Activated CD4-positive, alpha-beta memory T cell treated with anti-CD3 and anti-CD28 coated beads for 36 hours (primary cell): ENCODE measurements at regions of chr20 and their contacts with region 1.

Region 1: GRCh38 chr20:3420211-3420707 is 12.8 kb upstream of the DNAAF9 start:
- DNase-seq: peak; percentile 83
- H3K4me3 Mint-ChIP-seq: no peak overlapping the region
- H3K27ac Mint-ChIP-seq: peak overlapping the region; percentile 75
- H3K4me1 Mint-ChIP-seq: peaks cover 9% of the 10 kb centered on the region
- H3K27me3 Mint-ChIP-seq: no peaks in the 10 kb centered on the region

Region 2: DNA sequence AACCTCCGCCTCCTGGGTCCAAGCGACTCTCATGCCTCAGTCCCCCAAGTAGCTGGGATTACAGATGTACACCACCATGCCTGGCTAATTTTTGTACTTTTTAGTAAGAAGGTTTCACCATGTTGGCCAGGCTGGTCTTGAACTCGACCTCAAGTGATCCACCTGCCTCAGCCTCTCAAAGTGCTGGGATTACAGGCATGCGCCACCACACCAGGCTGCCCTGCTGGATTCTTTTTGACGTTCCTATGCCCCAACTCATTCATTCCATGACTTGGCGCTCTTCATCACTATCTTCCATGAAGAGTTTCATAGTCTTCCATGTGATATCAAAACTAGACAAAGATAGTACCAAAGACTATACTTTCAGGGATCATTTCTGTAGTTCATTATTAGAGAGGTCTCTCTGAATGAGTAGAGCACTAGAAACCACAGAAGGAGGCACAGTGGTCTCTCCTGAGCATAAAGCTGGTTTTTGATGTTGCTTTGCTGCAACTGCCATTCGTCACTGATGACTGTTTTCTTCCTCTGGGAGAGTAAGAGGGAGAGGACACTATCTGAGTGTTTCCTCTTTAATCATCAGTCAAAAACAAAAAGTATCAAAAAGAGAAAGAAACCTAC is 36.3 kb before region 1 on chr20:
- CTCF ChIA-PET with region 1: interaction called, 3 read pairs
- POLR2A ChIA-PET with region 1: interaction called, 10 read pairs
- intact Hi-C with region 1: loop called (anchors 1 kb)
- DNase-seq: peak; percentile 72
- H3K4me3 Mint-ChIP-seq: no peak overlapping the region
- H3K27ac Mint-ChIP-seq: peak overlapping the region; percentile 70
- H3K4me1 Mint-ChIP-seq: peaks cover 18% of the 10 kb centered on the region
- H3K27me3 Mint-ChIP-seq: no peaks in the 10 kb centered on the region

Region 3: DNA sequence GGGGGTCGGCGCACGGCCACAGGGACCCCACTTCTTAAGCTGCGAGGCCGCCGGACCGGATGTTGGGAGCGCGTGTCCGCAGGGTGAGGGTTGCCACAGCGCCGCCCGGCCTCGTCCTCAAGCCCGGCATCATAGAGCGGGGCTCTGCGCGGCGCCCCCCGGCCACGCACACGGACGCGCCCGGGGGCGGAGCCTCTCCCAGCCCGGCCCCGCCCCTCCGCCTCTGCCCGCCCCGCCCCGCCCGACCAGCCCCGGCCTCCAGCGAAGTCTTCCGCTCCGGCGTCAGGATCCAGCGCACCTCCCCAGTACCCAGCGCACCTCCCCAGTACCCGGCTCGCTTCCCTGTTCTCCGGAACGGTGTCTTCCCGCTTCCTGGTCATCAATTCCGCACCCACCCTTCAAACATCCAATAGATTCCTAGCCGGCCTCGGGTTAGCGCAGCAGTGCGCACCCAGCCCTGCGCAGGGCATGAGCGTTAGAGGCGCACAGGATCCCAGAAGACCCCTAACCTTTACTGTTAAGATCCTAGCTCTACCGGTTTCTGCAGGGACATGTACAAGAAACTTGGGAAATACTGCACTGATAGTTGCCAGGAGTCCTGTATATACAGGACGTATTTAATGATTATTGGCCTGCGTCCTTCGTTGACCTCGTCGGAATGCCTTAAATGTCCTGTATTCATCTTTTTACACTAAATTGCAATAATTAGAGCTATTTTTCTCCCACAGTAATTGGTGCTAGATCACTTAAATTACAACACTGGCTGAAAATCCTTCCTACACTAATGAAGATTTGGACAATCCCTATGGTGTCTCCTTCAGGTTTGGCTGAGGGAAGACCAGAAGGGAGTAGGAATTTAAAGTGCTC is 12.3 kb before region 1 on chr20:
- CTCF ChIA-PET with region 1: interaction called, 3 read pairs
- POLR2A ChIA-PET with region 1: interaction called, 5 read pairs
- intact Hi-C with region 1: loop called (anchors 1 kb)
- DNase-seq: peak; percentile 74
- H3K4me3 Mint-ChIP-seq: peak overlapping the region; percentile 84
- H3K27ac Mint-ChIP-seq: peak overlapping the region; percentile 75
- H3K4me1 Mint-ChIP-seq: peaks cover 34% of the 10 kb centered on the region
- H3K27me3 Mint-ChIP-seq: no peaks in the 10 kb centered on the region

Region 4: DNA sequence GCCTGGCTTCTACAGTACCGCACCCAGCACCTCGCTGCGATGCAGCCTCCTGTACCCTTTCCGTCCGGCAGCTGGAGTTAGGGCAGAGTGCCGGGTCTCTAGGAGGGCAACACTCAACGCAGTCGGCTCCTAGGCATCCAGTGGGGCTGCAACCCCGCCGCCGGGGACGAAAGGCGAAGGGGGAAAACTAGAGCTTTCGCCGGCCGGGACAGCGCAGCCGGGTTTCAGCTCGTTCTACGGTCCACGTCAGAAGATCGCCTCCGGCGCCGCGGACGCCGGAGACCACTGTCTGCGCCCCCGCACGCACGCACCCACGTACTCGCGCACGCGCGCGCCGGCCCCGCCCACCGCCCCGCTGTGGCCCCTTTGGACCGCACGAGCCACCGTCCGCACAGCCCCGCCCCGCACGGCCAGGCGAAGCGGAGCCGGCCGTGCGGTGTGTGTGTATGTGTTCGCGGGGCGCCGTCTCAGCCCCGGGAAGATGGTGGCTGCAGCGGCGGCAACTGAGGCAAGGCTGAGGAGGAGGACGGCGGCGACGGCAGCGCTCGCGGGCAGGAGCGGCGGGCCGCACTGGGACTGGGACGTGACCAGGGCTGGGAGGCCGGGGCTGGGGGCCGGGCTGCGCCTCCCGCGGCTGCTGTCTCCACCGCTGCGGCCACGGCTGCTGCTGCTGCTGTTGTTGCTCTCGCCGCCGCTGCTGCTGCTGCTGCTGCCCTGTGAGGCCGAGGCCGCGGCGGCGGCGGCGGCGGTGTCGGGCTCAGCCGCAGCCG is 50.6 kb after region 1 on chr20 and contains the start of gene ATRN:
- CTCF ChIA-PET with region 1: no interaction called
- POLR2A ChIA-PET with region 1: interaction called, 3 read pairs
- intact Hi-C with region 1: loop called (anchors 1 kb)
- DNase-seq: peak; percentile 95
- H3K4me3 Mint-ChIP-seq: peak within 1 kb of the TSS; percentile 85
- H3K27ac Mint-ChIP-seq: peak within 1 kb of the TSS; percentile 51
- H3K4me1 Mint-ChIP-seq: peaks cover 32% of the 10 kb centered on the region
- H3K27me3 Mint-ChIP-seq: no peaks in the 10 kb centered on the region
- total RNA-seq, gene ATRN: 7.3 to 7.8 TPM

Region 5: GRCh38 chr20:3509064-3509463 is 88.8 kb after region 1 on chr20:
- CTCF ChIA-PET with region 1: no interaction called
- POLR2A ChIA-PET with region 1: no interaction called
- intact Hi-C with region 1: loop called (anchors 1 kb)
- DNase-seq: no peak
- H3K4me3 Mint-ChIP-seq: no peak overlapping the region
- H3K27ac Mint-ChIP-seq: no peak overlapping the region
- H3K4me1 Mint-ChIP-seq: peaks cover 11% of the 10 kb centered on the region
- H3K27me3 Mint-ChIP-seq: no peaks in the 10 kb centered on the region